ENCODE measurements at regions of chr1 and their contacts with region 1.

Region 1: GRCh38 chr1:36099681-36100341 is 11.1 kb downstream of the ADPRS start:
- DNase-seq: peak; percentile 89
- ATAC-seq: peak; percentile 92

Region 2: GRCh38 chr1:36134505-36135329 is 34.9 kb after region 1 on chr1:
- intact Hi-C with region 1: loop called (anchors 5 kb)
- DNase-seq: peak; percentile 65
- ATAC-seq: peak; percentile 53

Region 3: DNA sequence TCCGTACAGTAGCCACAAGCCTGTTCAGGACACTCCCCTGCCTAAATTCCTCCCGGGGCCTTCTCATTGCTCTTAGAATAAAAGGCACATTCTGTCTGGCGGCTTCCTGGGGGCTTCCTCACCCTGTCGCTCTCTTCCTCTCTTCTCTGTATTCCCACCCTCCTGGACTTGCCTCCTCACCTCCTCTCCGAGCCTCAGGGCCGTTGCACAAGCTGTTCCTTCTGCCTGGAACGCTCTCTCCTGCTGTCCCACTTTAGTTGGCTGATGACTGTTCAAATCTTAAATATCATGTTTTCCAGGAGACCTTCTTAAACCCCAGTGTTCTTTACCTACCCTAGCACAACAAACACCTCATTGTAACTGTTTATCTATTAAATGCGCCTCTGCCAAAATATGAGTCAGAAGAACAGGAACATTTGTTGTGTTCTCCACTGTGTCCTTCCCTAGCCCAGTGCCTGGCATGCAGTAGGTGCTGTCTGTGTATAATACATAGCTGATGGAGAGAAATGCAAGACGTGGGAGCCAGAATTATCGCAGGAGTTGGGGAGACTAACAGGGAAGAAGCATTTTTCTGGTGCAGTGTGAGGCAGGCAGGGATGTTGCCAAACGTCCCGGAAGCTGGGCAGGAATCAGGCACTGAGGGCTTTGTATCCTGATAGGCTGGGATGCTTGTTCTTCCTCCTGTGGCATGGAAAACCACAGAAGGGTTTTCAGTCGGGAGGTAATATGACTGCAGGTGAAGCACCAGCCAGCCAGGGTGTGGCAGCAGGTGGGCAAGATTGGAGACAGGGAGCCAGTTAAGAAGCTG is 100.3 kb after region 1 on chr1:
- intact Hi-C with region 1: loop called (anchors 10 kb)
- DNase-seq: peak; percentile 49
- ATAC-seq: peak; percentile 51

Region 4: GRCh38 chr1:36285448-36286101 is 185.8 kb after region 1 on chr1:
- intact Hi-C with region 1: loop called (anchors 5 kb)
- DNase-seq: no peak
- ATAC-seq: peak; percentile 82

Region 5: DNA sequence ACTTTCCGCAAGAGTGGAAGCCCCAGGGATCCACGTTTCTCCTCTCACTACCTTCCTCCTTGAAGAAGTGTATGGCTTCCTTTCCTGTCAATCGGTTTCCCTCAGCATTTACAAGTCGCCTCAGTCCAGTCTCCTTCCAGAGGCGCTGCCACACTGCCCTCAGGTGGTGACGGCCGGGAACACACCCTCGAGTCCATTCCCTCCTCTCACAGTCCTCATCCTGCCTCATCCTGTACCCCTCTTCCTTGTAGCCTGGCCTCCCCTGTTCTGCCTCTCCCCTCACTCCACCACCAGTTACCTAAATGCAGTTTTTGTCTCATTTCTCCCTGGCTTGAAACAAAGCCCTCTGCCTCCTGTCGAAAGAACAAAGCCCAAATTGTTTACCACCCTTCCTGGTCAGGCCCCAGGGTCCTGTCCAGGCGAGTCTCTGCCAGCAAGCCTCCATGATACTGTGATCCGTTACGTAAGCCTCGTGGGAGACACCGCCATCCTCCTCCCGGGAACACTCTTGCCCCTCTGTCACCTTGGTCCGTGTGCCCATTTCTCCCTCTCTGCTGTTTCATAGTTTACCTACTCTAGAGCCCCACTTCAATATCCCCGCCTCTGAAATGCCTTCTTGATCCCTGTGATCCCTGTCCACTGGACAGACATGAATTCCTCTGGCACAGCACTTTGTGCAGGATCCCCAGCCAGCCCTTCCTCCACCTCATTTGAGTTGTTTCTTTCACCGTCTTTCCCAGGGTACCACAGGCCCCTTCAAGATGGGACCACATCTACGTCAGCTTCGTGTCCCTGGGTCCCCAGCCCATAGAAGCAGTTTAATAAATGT is 321.2 kb after region 1 on chr1:
- intact Hi-C with region 1: loop called (anchors 5 kb)
- DNase-seq: peak; percentile 92
- ATAC-seq: peak; percentile 96

Measured in Right ventricle myocardium superior (tissue), 1 donor.